ENCODE measurements at regions of chr7 and their contacts with region 1.

Region 1: GRCh38 chr7:47379629-47380324 is 202.1 kb downstream of the TNS3 start:
- DNase-seq: no peak
- H3K4me3 ChIP-seq: no peak overlapping the region
- CTCF ChIP-seq: no peak

Region 2: DNA sequence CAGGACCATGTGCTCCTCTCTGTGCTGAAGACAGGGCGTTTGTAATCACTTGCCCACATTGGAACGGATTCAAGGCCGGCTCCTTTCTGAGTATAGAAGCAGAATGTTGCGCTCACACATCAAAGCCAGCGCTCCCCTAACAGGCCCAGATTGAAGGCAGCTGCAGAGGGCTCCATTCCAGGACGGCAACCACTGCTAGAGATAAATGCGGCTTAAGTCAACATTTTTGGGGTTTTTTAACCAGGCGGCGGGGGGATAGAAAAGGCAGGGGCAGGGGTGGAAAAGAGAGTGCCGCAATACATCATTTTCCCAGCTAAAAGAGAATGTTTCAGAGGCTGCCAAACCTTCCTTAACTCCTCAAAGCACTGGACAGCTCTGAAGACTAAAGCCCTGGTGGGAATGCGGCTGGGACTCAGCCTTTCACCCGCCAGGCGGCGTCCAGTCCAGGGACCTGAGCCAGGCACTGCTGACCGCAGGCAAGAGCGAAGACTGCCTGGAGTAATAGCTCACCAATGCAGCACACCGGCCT is 12.5 kb after region 1 on chr7:
- CTCF ChIA-PET with region 1: interaction called, 16 read pairs
- POLR2A ChIA-PET with region 1: interaction called, 3 read pairs
- DNase-seq: no peak
- H3K4me3 ChIP-seq: no peak overlapping the region
- CTCF ChIP-seq: peak; percentile 71